H1 (cell line): ENCODE measurements at regions of chr9 and their contacts with region 1.

Region 1: DNA sequence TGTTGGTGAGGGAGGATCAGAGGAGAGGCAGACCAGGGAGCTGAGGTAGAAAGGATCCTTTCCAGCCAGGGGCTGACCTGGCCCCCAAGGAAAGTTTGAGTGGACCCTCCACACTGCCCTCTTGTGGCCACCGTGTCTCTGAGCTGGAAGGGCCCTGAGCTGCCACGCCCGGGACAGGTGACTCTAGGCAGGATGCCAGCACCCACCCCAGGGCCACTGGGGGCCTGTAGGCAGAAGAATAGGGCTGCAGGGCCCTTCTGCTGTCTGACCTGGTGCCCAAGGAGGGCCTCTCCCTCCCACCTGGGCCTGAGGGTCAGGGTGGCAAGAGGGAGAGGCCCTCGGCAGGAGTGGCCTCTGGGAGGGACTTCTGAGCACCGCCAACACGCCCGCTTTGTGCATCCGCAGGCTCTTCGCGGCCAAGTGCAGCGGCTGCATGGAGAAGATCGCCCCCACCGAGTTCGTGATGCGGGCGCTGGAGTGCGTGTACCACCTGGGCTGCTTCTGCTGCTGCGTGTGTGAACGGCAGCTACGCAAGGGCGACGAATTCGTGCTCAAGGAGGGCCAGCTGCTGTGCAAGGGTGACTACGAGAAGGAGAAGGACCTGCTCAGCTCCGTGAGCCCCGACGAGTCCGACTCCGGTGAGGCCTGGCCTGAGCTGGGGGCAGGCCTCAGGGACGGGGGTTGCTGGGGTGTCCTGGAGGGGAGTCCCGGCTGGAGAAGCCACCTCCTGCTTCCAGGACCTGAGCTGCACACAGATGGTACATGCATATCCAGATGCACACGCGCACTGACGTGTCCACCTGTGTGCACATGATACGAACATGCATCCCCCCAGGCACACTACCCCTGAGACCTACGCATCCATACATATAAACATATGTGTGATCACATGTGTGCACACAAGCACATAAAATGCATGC is 77.0 kb downstream of the LMX1B start:
- DNase-seq: peak in 1 of 2 experiments; percentile 95
- H3K4me3 ChIP-seq: no peak overlapping the region
- H3K27ac ChIP-seq: no peak overlapping the region
- H3K4me1 ChIP-seq: peaks cover 0 to 13% (median 3%) of the 10 kb centered on the region in 4 experiments; a peak in 5 of 7 replicates
- H3K27me3 ChIP-seq: peaks cover 0 to 7% (median 2%) of the 10 kb centered on the region in 4 experiments; a peak in 2 of 7 replicates
- CTCF ChIP-seq: peak in 2 of 3 experiments; percentile 88 to 91; a peak in 3 of 4 replicates
- EP300 ChIP-seq: no peak
- POLR2A ChIP-seq: no peak
- RAD21 ChIP-seq: peak; percentile 71 to 83

Region 2: GRCh38 chr9:126604059-126605055 is 86.3 kb before region 1 on chr9:
- CTCF ChIA-PET with region 1: interaction called, 35 read pairs
- POLR2A ChIA-PET with region 1: no interaction called
- DNase-seq: no peak
- H3K4me3 ChIP-seq: no peak overlapping the region
- H3K27ac ChIP-seq: no peak overlapping the region
- H3K4me1 ChIP-seq: peaks cover 0 to under 1% (median 0%) of the 10 kb centered on the region in 4 experiments; a peak in 1 of 7 replicates
- H3K27me3 ChIP-seq: peaks cover 9 to 29% (median 21%) of the 10 kb centered on the region in 4 experiments
- CTCF ChIP-seq: no peak
- EP300 ChIP-seq: no peak
- POLR2A ChIP-seq: no peak
- RAD21 ChIP-seq: no peak

Region 3: GRCh38 chr9:126618585-126619360 is 71.9 kb before region 1 on chr9:
- CTCF ChIA-PET with region 1: interaction called, 41 read pairs
- POLR2A ChIA-PET with region 1: interaction called, 4 read pairs
- DNase-seq: peak in 1 of 2 experiments; percentile 76
- H3K4me3 ChIP-seq: peak overlapping the region in 3 of 4 experiments; percentile 14 to 51 (median 29); a peak in 4 of 8 replicates
- H3K27ac ChIP-seq: no peak overlapping the region
- H3K4me1 ChIP-seq: peaks cover 14 to 61% (median 45%) of the 10 kb centered on the region in 4 experiments
- H3K27me3 ChIP-seq: peaks cover 95 to 97% (median 96%) of the 10 kb centered on the region in 4 experiments
- CTCF ChIP-seq: no peak
- EP300 ChIP-seq: no peak
- POLR2A ChIP-seq: no peak
- RAD21 ChIP-seq: no peak

Region 4: GRCh38 chr9:126650404-126651341 is 40.0 kb before region 1 on chr9:
- CTCF ChIA-PET with region 1: interaction called, 323 read pairs
- POLR2A ChIA-PET with region 1: no interaction called
- DNase-seq: no peak
- H3K4me3 ChIP-seq: no peak overlapping the region
- H3K27ac ChIP-seq: no peak overlapping the region
- H3K4me1 ChIP-seq: peaks cover 3 to 22% (median 11%) of the 10 kb centered on the region in 4 experiments
- H3K27me3 ChIP-seq: peaks cover 0 to 9% (median 0%) of the 10 kb centered on the region in 4 experiments; a peak in 3 of 7 replicates
- CTCF ChIP-seq: no peak
- EP300 ChIP-seq: no peak
- POLR2A ChIP-seq: no peak
- RAD21 ChIP-seq: no peak

Region 5: GRCh38 chr9:126673689-126674364 is 16.9 kb before region 1 on chr9:
- CTCF ChIA-PET with region 1: interaction called, 75 read pairs
- POLR2A ChIA-PET with region 1: interaction called, 13 read pairs
- DNase-seq: no peak
- H3K4me3 ChIP-seq: peak overlapping the region in 1 of 4 experiments; percentile 10; a peak in 1 of 8 replicates
- H3K27ac ChIP-seq: no peak overlapping the region
- H3K4me1 ChIP-seq: peaks cover 17 to 66% (median 55%) of the 10 kb centered on the region in 4 experiments
- H3K27me3 ChIP-seq: peaks cover 0 to 27% (median 17%) of the 10 kb centered on the region in 4 experiments; a peak in 6 of 7 replicates
- CTCF ChIP-seq: no peak
- EP300 ChIP-seq: no peak
- POLR2A ChIP-seq: no peak
- RAD21 ChIP-seq: no peak

Region 6: GRCh38 chr9:127004946-127005769 is 314.5 kb after region 1 on chr9:
- CTCF ChIA-PET with region 1: no interaction called
- POLR2A ChIA-PET with region 1: no interaction called
- DNase-seq: no peak
- H3K4me3 ChIP-seq: no peak overlapping the region
- H3K27ac ChIP-seq: no peak overlapping the region
- H3K4me1 ChIP-seq: no peaks in the 10 kb centered on the region
- H3K27me3 ChIP-seq: no peaks in the 10 kb centered on the region
- CTCF ChIP-seq: no peak
- EP300 ChIP-seq: no peak
- POLR2A ChIP-seq: no peak
- RAD21 ChIP-seq: no peak